Left ventricle myocardium superior (tissue), 1 donor: ENCODE measurements at regions of chr20 and their contacts with region 1.

Region 1: DNA sequence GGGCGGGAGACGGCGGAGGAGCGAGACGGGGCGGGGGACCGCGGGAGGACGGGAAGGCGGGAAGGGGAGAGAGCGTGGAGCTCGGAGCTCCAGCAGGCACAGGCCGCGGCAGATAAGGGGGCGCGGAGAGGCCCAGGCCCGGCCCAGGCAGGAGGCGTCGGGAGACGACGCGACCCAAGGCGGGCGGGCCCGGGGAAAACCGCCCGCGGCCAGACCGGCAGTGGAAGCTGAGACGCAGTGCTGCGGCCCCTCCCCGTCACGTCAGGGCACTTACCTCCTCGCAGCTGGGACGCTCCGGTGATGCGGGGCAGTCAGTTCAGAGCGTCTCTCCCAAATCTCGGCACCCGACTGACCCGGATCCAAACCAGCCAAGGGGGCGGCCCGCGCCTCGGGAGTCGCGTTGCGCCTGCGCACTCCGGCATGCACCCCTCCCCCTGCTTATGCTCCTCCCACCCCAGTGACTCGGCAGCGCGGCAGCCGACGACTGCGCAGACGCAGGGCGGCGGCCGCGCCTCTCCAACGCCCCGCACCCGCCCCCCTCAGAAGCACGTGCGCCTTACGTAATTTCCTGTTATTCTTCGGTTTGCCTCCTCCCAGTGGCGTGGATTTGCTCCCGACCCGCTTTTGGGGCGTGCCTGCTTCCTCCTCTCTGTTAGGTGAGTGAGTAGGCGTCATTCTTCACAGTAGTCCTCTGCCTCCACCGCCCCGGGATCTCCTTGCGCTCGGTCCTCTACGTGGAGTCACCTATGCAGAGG is at the start of gene OSER1:
- DNase-seq: peak; percentile 97
- ATAC-seq: peak; percentile 92
- total RNA-seq, gene OSER1: 35.2 TPM

Region 2: DNA sequence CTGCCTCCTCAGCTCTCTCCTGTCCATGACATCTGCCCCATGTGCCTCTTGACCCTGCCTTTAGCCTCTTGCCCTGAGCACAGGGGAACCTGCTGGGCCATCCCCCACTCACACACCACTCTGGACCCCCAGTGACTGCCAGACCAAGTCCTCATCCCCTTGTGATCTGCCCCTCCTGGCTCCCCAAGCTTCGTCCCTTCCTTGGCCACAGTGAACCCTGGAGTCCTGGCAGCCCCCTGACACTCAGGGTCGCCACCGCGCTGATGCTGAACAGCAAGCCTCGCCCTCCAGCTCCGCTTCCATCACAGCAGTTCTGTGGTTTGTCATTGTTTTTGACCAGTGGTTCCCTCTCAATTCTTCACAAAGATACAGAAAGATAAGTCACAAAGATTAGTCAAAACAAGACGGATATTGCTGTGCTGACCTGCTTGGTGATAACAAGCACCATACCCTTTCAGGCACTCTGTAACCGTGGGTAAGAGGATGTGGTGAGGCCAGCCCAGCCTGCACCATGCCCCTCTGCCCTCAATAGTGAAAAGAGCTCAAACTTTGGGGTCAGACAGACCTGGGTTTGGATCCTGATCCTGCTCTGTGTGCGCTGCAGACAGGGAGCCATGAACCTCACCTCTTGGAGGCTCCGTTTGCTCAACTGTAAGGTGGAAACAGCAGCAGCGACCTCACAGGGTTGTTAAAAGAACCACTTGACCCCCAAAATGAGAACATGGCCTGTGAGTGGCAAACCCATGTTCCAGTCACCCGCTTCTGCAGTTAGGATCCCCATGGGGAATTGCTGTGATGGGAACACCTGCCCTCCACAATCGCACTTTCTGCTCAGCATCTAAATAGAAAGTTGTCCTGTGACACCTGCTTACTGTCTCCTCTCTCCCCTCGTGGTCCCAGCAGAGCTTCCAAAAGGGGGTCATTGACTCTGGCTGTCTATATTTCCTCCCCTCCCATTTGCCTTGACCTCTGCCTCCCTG is 181.4 kb before region 1 on chr20:
- intact Hi-C with region 1: no loop called
- DNase-seq: no peak
- ATAC-seq: no peak

Region 3: GRCh38 chr20:44460795-44461141 is 250.2 kb after region 1 on chr20:
- intact Hi-C with region 1: loop called (anchors 10 kb)
- DNase-seq: no peak
- ATAC-seq: no peak